Activated T-helper 1 cell treated with anti-CD3 and anti-CD28 coated beads, Interleukin-12 subunit alpha, Interleukin-12 subunit beta, Interleukin-2, Interleukin-4 antibody, amounts not matched to agents 30 ng/mL and 10 ng/mL and 1 ng/mL, durations not matched to agents 14 hours and 24 hours and 36 hours (primary cell): ENCODE measurements at regions of chr2 and their contacts with region 1.

Region 1: GRCh38 chr2:16756831-16757644 is 91.4 kb upstream of the CYRIA start:
- DNase-seq: peak; percentile 47
- H3K4me3 Mint-ChIP-seq: no peak overlapping the region
- H3K27ac Mint-ChIP-seq: no peak overlapping the region
- H3K4me1 Mint-ChIP-seq: no peaks in the 10 kb centered on the region
- H3K27me3 Mint-ChIP-seq: peaks cover 2% of the 10 kb centered on the region

Region 2: DNA sequence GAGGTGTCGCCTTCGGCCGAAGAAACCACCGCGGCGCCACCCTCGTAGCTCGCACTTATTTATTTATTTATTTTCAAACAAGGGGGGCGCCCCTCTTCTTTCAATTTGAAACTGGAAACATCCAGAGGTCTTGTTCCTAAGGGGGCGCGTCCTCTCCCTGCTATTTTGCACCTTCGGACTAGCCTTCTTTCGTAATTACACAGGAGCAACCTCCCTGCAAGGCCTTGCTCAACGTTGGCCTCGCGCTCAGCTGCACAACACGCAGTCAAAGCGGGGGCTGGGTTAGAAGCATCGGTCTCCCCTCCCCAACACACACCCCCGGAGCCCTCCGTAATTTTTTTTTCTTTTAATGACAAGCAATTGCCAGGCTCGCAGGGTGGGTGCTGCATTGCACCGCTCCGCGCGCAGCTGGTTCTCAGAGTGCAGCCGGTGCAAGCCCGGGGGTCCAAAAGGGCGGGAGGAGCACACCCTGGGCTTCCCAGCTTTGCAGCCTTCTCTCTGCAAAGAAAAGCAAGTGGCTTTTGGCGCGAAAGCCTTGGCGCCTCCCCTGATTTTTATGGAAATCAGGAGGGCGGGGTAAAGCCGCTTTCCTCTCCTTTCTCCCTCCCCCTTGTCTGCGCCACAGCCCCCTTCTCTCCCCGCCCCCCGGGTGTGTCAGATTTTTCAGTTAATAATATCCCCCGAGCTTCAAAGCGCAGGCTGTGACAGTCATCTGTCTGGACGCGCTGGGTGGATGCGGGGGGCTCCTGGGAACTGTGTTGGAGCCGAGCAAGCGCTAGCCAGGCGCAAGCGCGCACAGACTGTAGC is 817.0 kb before region 1 on chr2 and contains the start of gene MYCN:
- intact Hi-C with region 1: loop called (anchors 2 kb)
- DNase-seq: peak; percentile 10
- H3K4me3 Mint-ChIP-seq: no peak within 1 kb of the TSS
- H3K27ac Mint-ChIP-seq: no peak within 1 kb of the TSS
- H3K4me1 Mint-ChIP-seq: peaks cover 5% of the 10 kb centered on the region
- H3K27me3 Mint-ChIP-seq: peaks cover 59% of the 10 kb centered on the region
- total RNA-seq, gene MYCN: not detected in 2 replicates

Region 3: GRCh38 chr2:16525265-16525887 is 231.7 kb before region 1 on chr2:
- intact Hi-C with region 1: loop called (anchors 1 kb)
- DNase-seq: no peak
- H3K4me3 Mint-ChIP-seq: no peak overlapping the region
- H3K27ac Mint-ChIP-seq: no peak overlapping the region
- H3K4me1 Mint-ChIP-seq: no peaks in the 10 kb centered on the region
- H3K27me3 Mint-ChIP-seq: no peaks in the 10 kb centered on the region

Region 4: DNA sequence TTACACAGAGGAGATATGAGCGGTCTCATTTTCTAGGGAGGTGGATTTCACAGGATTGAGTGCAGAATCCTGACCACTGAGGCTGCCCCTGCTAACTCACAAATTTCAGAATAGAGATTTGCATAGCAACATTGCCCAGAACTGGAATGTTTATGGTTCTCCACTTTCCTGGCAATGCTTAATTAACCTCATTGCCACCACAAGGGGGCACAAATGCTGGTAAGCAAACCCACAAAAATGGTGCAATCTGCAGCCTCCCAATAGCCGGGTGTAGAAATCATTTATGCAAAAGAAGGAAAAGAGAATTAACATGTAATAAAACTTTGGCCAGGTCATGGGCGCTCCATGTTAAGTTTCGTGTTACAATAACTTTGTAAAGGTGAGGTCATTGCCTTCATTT is 203.8 kb before region 1 on chr2:
- intact Hi-C with region 1: loop called (anchors 1 kb)
- DNase-seq: no peak
- H3K4me3 Mint-ChIP-seq: no peak overlapping the region
- H3K27ac Mint-ChIP-seq: no peak overlapping the region
- H3K4me1 Mint-ChIP-seq: no peaks in the 10 kb centered on the region
- H3K27me3 Mint-ChIP-seq: no peaks in the 10 kb centered on the region

Region 5: GRCh38 chr2:16617282-16618261 is 139.5 kb before region 1 on chr2:
- intact Hi-C with region 1: loop called (anchors 1 kb)
- DNase-seq: no peak
- H3K4me3 Mint-ChIP-seq: no peak overlapping the region
- H3K27ac Mint-ChIP-seq: no peak overlapping the region
- H3K4me1 Mint-ChIP-seq: peaks cover 6% of the 10 kb centered on the region
- H3K27me3 Mint-ChIP-seq: no peaks in the 10 kb centered on the region

Region 6: GRCh38 chr2:17000184-17000482 is 243.1 kb after region 1 on chr2:
- intact Hi-C with region 1: no loop called
- DNase-seq: no peak
- H3K4me3 Mint-ChIP-seq: no peak overlapping the region
- H3K27ac Mint-ChIP-seq: no peak overlapping the region
- H3K4me1 Mint-ChIP-seq: no peaks in the 10 kb centered on the region
- H3K27me3 Mint-ChIP-seq: no peaks in the 10 kb centered on the region